IMR-90 (cell line): ENCODE measurements at regions of chr5 and their contacts with region 1.

Region 1: GRCh38 chr5:159965031-159965837 is 43.7 kb upstream of the TTC1 start:
- DNase-seq: peak; percentile 57
- ATAC-seq: peak; percentile 96
- H3K4me3 ChIP-seq: no peak overlapping the region
- H3K27ac ChIP-seq: no peak overlapping the region
- H3K4me1 ChIP-seq: peaks cover 5% of the 10 kb centered on the region
- H3K27me3 ChIP-seq: no peaks in the 10 kb centered on the region
- CTCF ChIP-seq: peak; percentile 71
- POLR2A ChIP-seq: no peak
- RAD21 ChIP-seq: peak; percentile 85

Region 2: GRCh38 chr5:159286420-159287035 is 678.7 kb before region 1 on chr5:
- CTCF ChIA-PET with region 1: no interaction called
- POLR2A ChIA-PET with region 1: no interaction called
- dilution Hi-C with region 1: no loop called
- in situ Hi-C with region 1: no loop called
- intact Hi-C with region 1: loop called (anchors 5 kb)
- DNase-seq: peak; percentile 48
- ATAC-seq: peak; percentile 53; the same call in 1 of the 2 replicates
- H3K4me3 ChIP-seq: no peak overlapping the region
- H3K27ac ChIP-seq: no peak overlapping the region
- H3K4me1 ChIP-seq: no peaks in the 10 kb centered on the region
- H3K27me3 ChIP-seq: no peaks in the 10 kb centered on the region
- CTCF ChIP-seq: peak; percentile 56
- POLR2A ChIP-seq: no peak
- RAD21 ChIP-seq: peak; percentile 77

Region 3: GRCh38 chr5:159331093-159331973 is 633.9 kb before region 1 on chr5:
- CTCF ChIA-PET with region 1: no interaction called
- POLR2A ChIA-PET with region 1: no interaction called
- dilution Hi-C with region 1: no loop called
- in situ Hi-C with region 1: no loop called
- intact Hi-C with region 1: loop called (anchors 5 kb)
- DNase-seq: peak; percentile 19
- ATAC-seq: peak; percentile 68
- H3K4me3 ChIP-seq: peak overlapping the region; percentile 39
- H3K27ac ChIP-seq: no peak overlapping the region; the same call in 1 of the 2 replicates
- H3K4me1 ChIP-seq: peaks cover 4% of the 10 kb centered on the region; the same call in 1 of the 2 replicates
- H3K27me3 ChIP-seq: no peaks in the 10 kb centered on the region
- CTCF ChIP-seq: peak; percentile 48
- POLR2A ChIP-seq: no peak
- RAD21 ChIP-seq: 0 out of 2 replicates have a peak, but pooled peaks have one; percentile 28

Region 4: DNA sequence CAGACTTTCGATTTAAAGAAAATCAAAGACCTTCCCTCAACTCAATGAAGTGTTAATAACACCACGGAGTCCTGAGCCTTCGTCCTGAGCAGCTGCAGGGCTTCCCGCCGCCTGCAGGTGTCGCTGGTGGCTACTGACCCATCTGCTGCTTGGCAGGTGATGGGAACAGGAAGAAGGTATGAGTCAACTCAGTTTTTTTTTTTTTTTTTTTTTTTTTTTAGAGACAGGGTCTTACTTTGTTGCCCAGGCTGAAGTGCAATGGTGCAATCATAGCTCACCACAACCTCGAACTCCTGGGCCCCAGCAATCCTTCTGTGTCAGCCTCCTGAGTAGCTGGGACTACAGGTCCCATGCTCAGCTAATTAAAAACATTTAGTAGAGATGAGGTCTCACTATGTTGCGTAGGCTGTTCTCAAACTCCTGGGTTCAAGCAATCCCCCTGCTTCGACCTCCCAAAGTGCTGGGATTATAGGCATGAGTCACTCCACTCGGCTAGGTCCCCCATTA is 449.3 kb before region 1 on chr5:
- CTCF ChIA-PET with region 1: no interaction called
- POLR2A ChIA-PET with region 1: no interaction called
- dilution Hi-C with region 1: no loop called
- in situ Hi-C with region 1: no loop called
- intact Hi-C with region 1: loop called (anchors 5 kb)
- DNase-seq: peak; percentile 42
- ATAC-seq: 0 out of 2 replicates have a peak, but pooled peaks have one; percentile 48
- H3K4me3 ChIP-seq: no peak overlapping the region
- H3K27ac ChIP-seq: no peak overlapping the region
- H3K4me1 ChIP-seq: peaks cover 5% of the 10 kb centered on the region
- H3K27me3 ChIP-seq: peaks cover 4% of the 10 kb centered on the region
- CTCF ChIP-seq: peak; percentile 69
- POLR2A ChIP-seq: no peak
- RAD21 ChIP-seq: peak; percentile 69